ENCODE measurements at regions of chr17 and their contacts with region 1.

Region 1: DNA sequence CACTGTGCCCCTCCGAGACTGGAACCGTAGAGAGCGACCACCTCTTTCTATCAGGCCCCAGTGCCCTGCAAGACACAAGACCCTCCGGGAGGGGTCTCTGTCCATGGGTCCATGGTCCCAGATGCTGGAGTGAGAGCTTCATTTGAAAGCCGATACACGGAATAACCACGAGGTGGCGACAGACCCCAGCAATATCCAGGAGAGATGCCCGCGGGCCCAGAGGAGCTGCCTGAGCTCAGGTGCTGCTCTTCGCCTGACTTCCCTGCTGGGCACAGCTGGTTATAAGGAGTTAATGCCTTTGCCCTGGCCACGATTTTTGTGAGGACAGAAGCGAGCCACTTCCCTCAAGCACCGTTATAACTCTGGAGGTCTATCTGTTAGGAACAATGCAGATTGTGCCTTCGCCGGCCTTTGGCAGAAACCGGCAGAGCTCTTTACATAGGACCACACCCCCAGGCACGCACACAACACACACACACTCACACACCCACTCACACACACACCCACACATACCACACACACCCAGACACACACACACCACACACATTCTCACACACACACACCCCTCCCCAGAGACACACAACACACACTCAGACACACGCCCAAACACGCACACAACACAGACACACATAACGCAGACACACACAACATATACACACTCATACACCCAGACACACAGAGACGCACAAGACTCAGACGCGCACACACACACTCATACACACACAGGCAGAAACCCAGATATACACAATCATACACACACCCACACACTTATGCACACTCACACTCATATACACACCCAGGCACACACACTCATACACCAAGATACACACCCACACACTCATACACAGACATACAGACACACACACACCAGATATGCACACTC is 436.4 kb downstream of the SOX9 start:
- DNase-seq: peak in 1 of 2 experiments; percentile 88
- H3K4me3 ChIP-seq: no peak overlapping the region
- H3K27ac ChIP-seq: no peak overlapping the region
- H3K4me1 ChIP-seq: peaks cover 0 to 10% (median 2%) of the 10 kb centered on the region in 4 experiments; a peak in 4 of 7 replicates
- H3K27me3 ChIP-seq: no peaks in the 10 kb centered on the region
- CTCF ChIP-seq: peak; percentile 73 to 99 (median 96)
- EP300 ChIP-seq: no peak; a peak in 1 of 3 replicates
- POLR2A ChIP-seq: no peak
- RAD21 ChIP-seq: peak; percentile 92 to 95

Region 2: DNA sequence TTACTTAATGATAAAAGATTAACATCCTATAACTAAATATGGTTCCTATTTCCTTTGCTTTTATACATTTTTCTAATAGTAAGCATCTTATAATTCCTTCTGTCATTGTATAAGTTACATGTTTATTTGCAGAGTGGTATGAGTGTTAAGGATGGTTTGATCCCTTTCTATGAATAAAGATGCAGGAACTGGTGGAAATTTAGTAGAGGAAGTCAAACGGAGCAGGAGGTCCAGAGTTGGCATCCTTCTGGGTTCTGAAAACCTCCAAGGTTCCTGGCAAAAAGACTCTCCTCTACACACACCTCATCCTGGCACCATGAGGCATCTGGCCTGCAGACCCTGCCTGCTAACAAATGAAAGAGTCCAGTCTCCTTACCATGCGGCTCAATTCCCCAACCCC is 139.6 kb before region 1 on chr17:
- CTCF ChIA-PET with region 1: no interaction called
- POLR2A ChIA-PET with region 1: no interaction called
- DNase-seq: no peak
- H3K4me3 ChIP-seq: no peak overlapping the region
- H3K27ac ChIP-seq: no peak overlapping the region
- H3K4me1 ChIP-seq: peaks cover 0 to 6% (median 0%) of the 10 kb centered on the region in 4 experiments; a peak in 2 of 7 replicates
- H3K27me3 ChIP-seq: no peaks in the 10 kb centered on the region; a peak in 1 of 7 replicates
- CTCF ChIP-seq: no peak
- EP300 ChIP-seq: no peak
- POLR2A ChIP-seq: no peak
- RAD21 ChIP-seq: no peak

Region 3: GRCh38 chr17:72456026-72456569 is 101.1 kb before region 1 on chr17:
- CTCF ChIA-PET with region 1: no interaction called
- POLR2A ChIA-PET with region 1: no interaction called
- DNase-seq: no peak
- H3K4me3 ChIP-seq: no peak overlapping the region
- H3K27ac ChIP-seq: no peak overlapping the region
- H3K4me1 ChIP-seq: 0 out of 7 replicates have a peak, but pooled peaks cover 0 to 2% (median 0%) of the 10 kb centered on the region in 4 experiments
- H3K27me3 ChIP-seq: no peaks in the 10 kb centered on the region
- CTCF ChIP-seq: no peak
- EP300 ChIP-seq: no peak
- POLR2A ChIP-seq: no peak
- RAD21 ChIP-seq: no peak

Region 4: GRCh38 chr17:72580321-72581127 is 23.3 kb after region 1 on chr17:
- CTCF ChIA-PET with region 1: interaction called, 35 read pairs
- POLR2A ChIA-PET with region 1: no interaction called
- DNase-seq: no peak
- H3K4me3 ChIP-seq: no peak overlapping the region
- H3K27ac ChIP-seq: no peak overlapping the region
- H3K4me1 ChIP-seq: peaks cover 0 to 12% (median 6%) of the 10 kb centered on the region in 4 experiments; a peak in 5 of 7 replicates
- H3K27me3 ChIP-seq: no peaks in the 10 kb centered on the region
- CTCF ChIP-seq: no peak
- EP300 ChIP-seq: no peak
- POLR2A ChIP-seq: no peak
- RAD21 ChIP-seq: no peak

Region 5: GRCh38 chr17:72614871-72615626 is 57.9 kb after region 1 on chr17:
- CTCF ChIA-PET with region 1: interaction called, 32 read pairs
- POLR2A ChIA-PET with region 1: no interaction called
- DNase-seq: no peak
- H3K4me3 ChIP-seq: peak overlapping the region in 1 of 4 experiments; percentile 48; a peak in 1 of 8 replicates
- H3K27ac ChIP-seq: no peak overlapping the region
- H3K4me1 ChIP-seq: peaks cover 2 to 6% (median 3%) of the 10 kb centered on the region in 4 experiments; a peak in 4 of 7 replicates
- H3K27me3 ChIP-seq: peaks cover 0 to 2% (median 0%) of the 10 kb centered on the region in 4 experiments; a peak in 2 of 7 replicates
- CTCF ChIP-seq: no peak
- EP300 ChIP-seq: no peak
- POLR2A ChIP-seq: no peak
- RAD21 ChIP-seq: no peak

Region 6: GRCh38 chr17:72656130-72656763 is 99.1 kb after region 1 on chr17:
- CTCF ChIA-PET with region 1: interaction called, 27 read pairs
- POLR2A ChIA-PET with region 1: no interaction called
- DNase-seq: no peak
- H3K4me3 ChIP-seq: no peak overlapping the region
- H3K27ac ChIP-seq: no peak overlapping the region
- H3K4me1 ChIP-seq: peaks cover 0 to 3% (median 1%) of the 10 kb centered on the region in 4 experiments; a peak in 3 of 7 replicates
- H3K27me3 ChIP-seq: no peaks in the 10 kb centered on the region; a peak in 1 of 7 replicates
- CTCF ChIP-seq: no peak
- EP300 ChIP-seq: no peak
- POLR2A ChIP-seq: no peak
- RAD21 ChIP-seq: no peak

Region 7: DNA sequence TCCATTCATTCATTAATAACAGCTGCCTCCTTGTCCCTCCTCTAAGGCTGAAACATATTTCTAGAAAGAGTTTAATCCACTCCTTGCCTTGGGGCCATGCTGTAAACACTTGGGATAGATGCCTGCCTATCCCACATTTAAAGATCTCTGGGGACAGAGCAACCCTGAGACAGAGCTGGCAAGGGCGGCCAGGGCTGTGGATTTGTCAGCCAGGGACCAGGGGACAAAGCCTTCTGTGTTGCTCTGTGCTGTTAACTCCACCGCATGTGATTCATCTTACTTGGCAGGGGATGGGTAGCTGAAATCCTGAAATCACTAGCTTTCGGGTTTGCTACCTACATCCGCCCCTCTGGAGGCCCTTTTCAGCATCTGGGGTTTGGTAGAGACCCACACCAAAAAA is 142.4 kb after region 1 on chr17:
- CTCF ChIA-PET with region 1: interaction called, 27 read pairs
- POLR2A ChIA-PET with region 1: no interaction called
- DNase-seq: no peak
- H3K4me3 ChIP-seq: no peak overlapping the region
- H3K27ac ChIP-seq: no peak overlapping the region
- H3K4me1 ChIP-seq: no peaks in the 10 kb centered on the region
- H3K27me3 ChIP-seq: no peaks in the 10 kb centered on the region; a peak in 1 of 7 replicates
- CTCF ChIP-seq: no peak
- EP300 ChIP-seq: no peak
- POLR2A ChIP-seq: no peak
- RAD21 ChIP-seq: no peak

Region 8: DNA sequence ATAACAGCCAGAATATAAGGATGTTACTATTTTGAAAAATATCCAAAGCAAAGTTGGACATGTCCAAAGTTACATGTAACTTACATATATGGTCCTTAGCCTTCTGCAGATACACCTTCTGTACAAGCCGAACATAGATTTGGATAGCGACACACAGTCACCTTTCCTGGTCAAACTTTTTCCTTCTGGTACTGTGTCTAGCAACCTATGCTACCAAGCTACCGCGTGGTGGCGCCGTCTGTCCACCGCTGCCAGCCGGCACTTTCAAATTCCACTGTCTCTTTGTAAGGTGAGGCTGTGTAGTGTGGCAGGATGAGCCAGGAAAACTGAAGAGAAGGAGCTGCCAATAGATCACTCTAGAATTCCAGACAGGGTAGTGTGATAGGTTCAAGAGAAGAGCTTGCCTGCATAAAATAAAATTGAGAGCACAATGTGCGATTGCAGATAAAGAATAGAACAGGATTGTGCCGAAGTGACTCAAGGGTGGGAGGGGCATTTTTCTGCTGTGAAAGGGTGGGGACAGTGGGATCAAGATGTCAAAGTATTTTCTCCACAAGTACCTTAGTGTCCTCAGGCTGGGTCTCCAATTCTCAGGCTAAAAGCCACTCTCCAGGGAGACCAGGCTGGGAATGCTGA is 168.4 kb after region 1 on chr17:
- CTCF ChIA-PET with region 1: interaction called, 178 read pairs
- POLR2A ChIA-PET with region 1: interaction called, 3 read pairs
- DNase-seq: peak in 1 of 2 experiments; percentile 71
- H3K4me3 ChIP-seq: no peak overlapping the region
- H3K27ac ChIP-seq: no peak overlapping the region
- H3K4me1 ChIP-seq: no peaks in the 10 kb centered on the region; a peak in 3 of 7 replicates
- H3K27me3 ChIP-seq: no peaks in the 10 kb centered on the region
- CTCF ChIP-seq: peak; percentile 90 to 93 (median 93)
- EP300 ChIP-seq: no peak
- POLR2A ChIP-seq: no peak
- RAD21 ChIP-seq: peak; percentile 96 to 98

Measured in H1 (cell line).